ENCODE measurements at regions of chr1 and their contacts with region 1.

Region 1: DNA sequence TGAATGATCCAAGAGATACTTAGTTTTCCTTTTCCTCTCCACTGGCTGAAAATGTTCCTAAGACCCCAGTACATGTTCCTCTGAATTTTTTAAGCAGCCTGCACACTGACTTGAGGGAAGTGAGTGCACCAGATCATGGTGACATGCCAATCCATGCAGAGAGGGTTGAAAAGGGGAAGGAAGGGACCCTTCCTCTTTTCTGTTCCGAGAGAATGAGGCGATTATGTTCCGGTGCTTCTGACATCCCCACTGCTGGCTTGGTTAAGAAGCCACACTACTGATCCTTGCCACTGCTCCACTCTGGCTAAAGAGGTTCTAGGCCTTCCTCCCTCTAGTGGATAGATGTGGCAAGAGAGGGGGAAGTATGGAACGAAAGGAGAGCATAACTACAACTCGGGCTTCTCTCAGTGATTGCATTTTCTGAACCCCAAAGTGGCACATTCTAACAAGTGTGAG is 1.8 kb upstream of the CYB5R1 start:
- DNase-seq: no peak

Region 2: DNA sequence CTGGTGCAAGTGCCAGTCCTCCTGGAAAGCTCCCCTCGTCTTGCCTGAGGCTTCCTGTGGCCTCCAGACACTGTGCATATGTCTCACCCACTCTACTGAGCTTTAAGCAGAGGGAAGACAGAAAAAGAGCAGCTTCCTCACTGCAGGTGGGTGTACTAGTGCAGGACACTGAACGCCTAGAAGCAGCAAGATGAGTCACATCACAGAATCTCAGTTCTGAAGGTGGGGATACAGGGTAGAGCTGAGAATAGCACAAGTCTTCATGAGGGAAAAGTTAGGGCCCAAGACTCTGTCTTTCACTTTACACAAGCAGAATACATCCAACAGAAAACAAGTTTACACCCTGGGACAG is 120.7 kb before region 1 on chr1:
- intact Hi-C with region 1: no loop called
- DNase-seq: no peak

Region 3: GRCh38 chr1:202888531-202889360 is 80.1 kb before region 1 on chr1 and contains the start of gene RABIF:
- intact Hi-C with region 1: loop called (anchors 1 kb)
- DNase-seq: peak; percentile 98
- total RNA-seq, gene RABIF: 5.8 TPM

Region 4: GRCh38 chr1:202926720-202927491 is 42.0 kb before region 1 on chr1 and contains the start of gene KLHL12:
- intact Hi-C with region 1: loop called (anchors 2 kb)
- DNase-seq: peak; percentile 98
- total RNA-seq, gene KLHL12: 23.3 TPM

Region 5: DNA sequence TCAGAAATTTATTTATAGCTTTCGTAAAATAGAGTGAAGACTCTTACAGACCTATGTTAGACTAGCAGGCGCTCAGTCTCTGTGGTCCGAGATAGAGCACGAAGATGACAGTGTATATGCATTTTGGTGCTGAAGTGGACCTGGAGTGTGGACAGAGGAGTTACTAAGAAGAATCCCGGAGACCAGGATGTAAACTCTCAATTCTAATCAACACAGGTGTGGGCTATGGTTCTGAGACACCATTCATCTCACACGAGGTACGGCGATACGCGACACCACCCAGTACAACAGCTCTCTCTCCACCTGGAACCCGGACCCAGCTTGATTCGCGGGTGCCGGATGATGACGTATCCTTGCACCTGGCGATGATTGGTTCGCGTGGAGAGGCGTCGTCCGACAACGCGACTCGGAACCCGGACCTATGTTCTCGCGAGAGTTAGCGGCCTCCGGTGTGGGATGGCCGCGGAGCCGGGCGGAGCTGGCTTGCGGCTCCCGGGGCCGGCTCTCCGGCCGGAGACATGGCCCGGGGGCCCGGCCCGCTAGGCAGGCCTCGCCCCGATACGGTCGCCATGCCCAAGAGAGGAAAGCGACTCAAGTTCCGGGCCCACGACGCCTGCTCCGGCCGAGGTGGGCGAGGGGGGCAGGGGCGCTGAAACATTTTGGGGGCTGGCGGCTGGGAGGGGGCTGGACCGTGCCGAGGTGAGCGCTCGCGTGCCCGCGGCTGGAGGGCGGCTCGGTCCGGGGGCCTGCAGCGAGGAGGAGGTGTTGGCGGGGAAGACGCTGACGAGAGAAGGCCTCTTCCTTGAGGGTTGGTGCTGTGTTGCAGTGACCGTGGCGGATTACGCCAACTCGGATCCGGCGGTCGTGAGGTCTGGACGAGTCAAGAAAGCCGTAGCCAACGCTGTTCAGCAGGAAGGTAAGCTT is 38.3 kb after region 1 on chr1 and contains the start of gene TMEM183A:
- intact Hi-C with region 1: loop called (anchors 5 kb)
- DNase-seq: peak; percentile 98
- total RNA-seq, gene TMEM183A: 27.7 TPM

Region 6: GRCh38 chr1:203026031-203026989 is 57.4 kb after region 1 on chr1 and contains the start of gene PPFIA4:
- intact Hi-C with region 1: loop called (anchors 5 kb)
- DNase-seq: peak; percentile 95
- total RNA-seq, gene PPFIA4: 46.7 TPM

Measured in cardiac septum (tissue), 1 donor.